ENCODE measurements at regions of chr12 and their contacts with region 1.

Region 1: GRCh38 chr12:111268738-111269572 is 99.9 kb downstream of the PHETA1 start:
- DNase-seq: peak; percentile 53
- ATAC-seq: no peak
- H3K4me3 Mint-ChIP-seq: no peak overlapping the region
- H3K27ac Mint-ChIP-seq: no peak overlapping the region
- H3K4me1 Mint-ChIP-seq: no peaks in the 10 kb centered on the region
- H3K27me3 Mint-ChIP-seq: peaks cover 3% of the 10 kb centered on the region

Region 2: GRCh38 chr12:111298582-111299436 is 29.9 kb after region 1 on chr12:
- CTCF ChIA-PET with region 1: interaction called, 19 read pairs
- POLR2A ChIA-PET with region 1: no interaction called
- intact Hi-C with region 1: no loop called
- DNase-seq: peak; percentile 76
- ATAC-seq: peak; percentile 60
- H3K4me3 Mint-ChIP-seq: no peak overlapping the region
- H3K27ac Mint-ChIP-seq: no peak overlapping the region
- H3K4me1 Mint-ChIP-seq: no peaks in the 10 kb centered on the region
- H3K27me3 Mint-ChIP-seq: no peaks in the 10 kb centered on the region

Region 3: DNA sequence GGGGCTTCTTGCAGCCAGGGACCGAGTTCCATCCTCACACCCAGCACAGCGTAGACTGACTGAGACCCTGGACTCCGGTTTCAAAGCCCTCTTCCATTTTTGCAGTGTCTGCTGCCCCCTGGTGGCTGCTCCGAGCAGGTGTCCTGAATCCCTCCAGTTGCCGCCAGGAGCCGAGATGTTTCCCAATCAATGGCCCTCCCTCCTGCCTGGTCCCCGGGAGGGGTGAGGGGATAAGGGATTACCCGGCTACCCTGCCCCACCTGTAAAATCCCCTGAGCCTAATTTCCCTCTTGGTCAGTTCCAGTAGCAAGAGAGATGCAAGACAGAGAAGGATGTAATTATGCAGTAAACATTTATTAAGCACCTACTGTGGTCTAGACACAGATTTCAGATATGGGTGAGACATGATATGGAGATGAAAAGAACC is 44.9 kb after region 1 on chr12:
- CTCF ChIA-PET with region 1: interaction called, 3 read pairs
- POLR2A ChIA-PET with region 1: interaction called, 3 read pairs
- intact Hi-C with region 1: loop called in 1 of 2 experiments (anchors 1 kb)
- DNase-seq: peak; percentile 85
- ATAC-seq: peak; percentile 77
- H3K4me3 Mint-ChIP-seq: no peak overlapping the region
- H3K27ac Mint-ChIP-seq: no peak overlapping the region
- H3K4me1 Mint-ChIP-seq: peaks cover 9% of the 10 kb centered on the region
- H3K27me3 Mint-ChIP-seq: peaks cover 4% of the 10 kb centered on the region

Measured in activated CD4-positive, alpha-beta T cell treated with anti-CD3 and anti-CD28 coated beads for 36 hours (primary cell).